ENCODE measurements at regions of chr1 and their contacts with region 1.

Region 1: DNA sequence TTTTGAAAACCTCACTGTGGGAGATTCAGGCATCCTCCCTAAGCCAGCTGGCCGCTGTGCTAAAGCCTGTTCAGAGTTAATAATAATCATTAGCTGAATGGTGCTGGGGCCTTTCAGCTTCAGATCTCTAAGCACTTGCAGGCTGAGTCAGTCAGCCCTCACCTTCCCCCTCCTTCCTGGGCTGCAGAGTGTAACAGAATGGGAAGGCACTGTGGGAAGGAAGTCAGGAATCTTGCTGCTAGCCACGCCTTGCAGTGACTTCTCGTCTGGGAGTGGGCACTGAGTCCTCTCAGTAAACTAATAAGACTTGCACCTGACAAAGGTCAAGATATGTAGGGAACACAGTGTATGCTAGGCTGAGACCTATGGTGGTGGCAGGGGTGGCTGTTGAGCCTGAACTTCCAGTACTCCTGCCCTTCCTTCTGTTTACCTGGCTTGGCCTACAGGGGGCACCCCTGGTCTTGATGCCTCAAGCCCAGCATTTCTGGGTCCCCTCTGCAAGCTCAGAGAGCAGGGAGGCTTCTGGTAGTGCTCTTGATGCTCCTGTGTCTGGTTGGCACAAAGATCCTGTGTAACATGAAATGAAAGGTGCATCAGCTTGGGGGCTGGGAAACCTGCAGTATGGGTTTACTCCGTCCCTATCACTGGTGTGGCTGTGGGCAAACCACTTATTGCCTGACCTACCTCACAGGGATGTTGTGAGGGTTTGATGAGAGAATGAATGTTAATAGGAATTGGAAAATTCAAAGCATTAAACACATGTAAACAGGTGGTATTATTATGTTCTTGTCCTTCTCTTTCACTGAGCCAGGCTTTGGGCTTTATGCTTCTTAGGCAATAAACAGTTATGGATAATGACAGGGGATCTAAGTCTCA is 6.0 kb downstream of the CYB561D1 start:
- DNase-seq: peak; percentile 51 to 69
- H3K4me3 ChIP-seq: no peak overlapping the region
- H3K27ac ChIP-seq: no peak overlapping the region
- H3K4me1 ChIP-seq: peaks cover 17% of the 10 kb centered on the region
- H3K27me3 ChIP-seq: no peaks in the 10 kb centered on the region
- CTCF ChIP-seq: peak; percentile 86

Region 2: DNA sequence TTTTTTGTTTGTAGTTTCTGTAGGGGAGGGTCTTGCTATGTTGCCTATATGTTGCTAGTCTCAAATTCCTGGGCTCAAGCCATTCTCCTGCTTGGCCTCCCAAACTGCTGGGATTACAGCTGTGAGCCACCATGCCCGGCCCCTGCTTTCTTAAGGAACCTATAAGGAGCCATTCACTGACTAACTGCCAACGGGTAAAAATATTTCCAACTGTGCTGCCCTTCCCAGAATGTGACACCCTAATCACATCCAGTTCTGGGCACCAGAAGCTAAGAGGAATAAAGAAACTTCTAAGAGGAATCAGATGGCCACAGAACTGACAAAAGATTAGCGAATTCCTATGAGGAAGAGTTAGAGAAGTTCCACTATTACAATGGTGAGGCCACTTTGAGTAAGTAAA is 27.1 kb before region 1 on chr1:
- CTCF ChIA-PET with region 1: interaction called, 10 read pairs
- POLR2A ChIA-PET with region 1: no interaction called
- intact Hi-C with region 1: no loop called
- DNase-seq: no peak
- H3K4me3 ChIP-seq: no peak overlapping the region
- H3K27ac ChIP-seq: no peak overlapping the region
- H3K4me1 ChIP-seq: peaks cover 7% of the 10 kb centered on the region
- H3K27me3 ChIP-seq: peaks cover 97% of the 10 kb centered on the region
- CTCF ChIP-seq: no peak

Region 3: GRCh38 chr1:109864047-109864822 is 364.3 kb after region 1 on chr1:
- CTCF ChIA-PET with region 1: no interaction called
- POLR2A ChIA-PET with region 1: no interaction called
- intact Hi-C with region 1: no loop called
- DNase-seq: no peak
- H3K4me3 ChIP-seq: no peak overlapping the region
- H3K27ac ChIP-seq: no peak overlapping the region
- H3K4me1 ChIP-seq: peaks cover 6% of the 10 kb centered on the region; the same call in 1 of the 2 replicates
- H3K27me3 ChIP-seq: no peaks in the 10 kb centered on the region
- CTCF ChIP-seq: no peak

Measured in PC-9 (cell line).